Activated T-helper 1 cell treated with anti-CD3 and anti-CD28 coated beads, Interleukin-12 subunit alpha, Interleukin-12 subunit beta, Interleukin-2, Interleukin-4 antibody, amounts not matched to agents 30 ng/mL and 10 ng/mL and 1 ng/mL, durations not matched to agents 14 hours and 24 hours and 36 hours (primary cell): ENCODE measurements at regions of chrX and their contacts with region 1.

Region 1: GRCh38 chrX:119266364-119266995 is 30.4 kb downstream of the PGRMC1 start:
- DNase-seq: no peak
- H3K4me3 Mint-ChIP-seq: no peak overlapping the region
- H3K27ac Mint-ChIP-seq: no peak overlapping the region
- H3K4me1 Mint-ChIP-seq: no peaks in the 10 kb centered on the region
- H3K27me3 Mint-ChIP-seq: peaks cover 18% of the 10 kb centered on the region

Region 2: DNA sequence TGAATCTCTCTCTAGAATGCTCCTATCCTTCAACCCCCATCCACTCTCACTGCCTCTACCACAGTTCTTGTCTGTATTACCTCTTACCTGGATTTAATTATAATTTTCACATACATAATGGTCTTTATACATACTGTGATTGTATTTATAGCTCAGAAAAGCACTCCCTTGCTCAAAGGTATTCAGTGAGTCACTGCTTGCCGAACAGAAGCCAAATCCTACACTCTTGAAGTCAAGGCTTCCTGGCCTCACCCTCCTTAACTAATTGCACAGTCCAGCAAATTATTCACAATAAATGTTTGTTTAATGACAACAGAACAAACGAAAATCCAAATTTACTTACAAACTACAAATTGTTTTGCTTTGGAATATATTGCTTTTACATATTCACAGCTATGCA is 1309.4 kb before region 1 on chrX:
- intact Hi-C with region 1: no loop called
- DNase-seq: no peak
- H3K4me3 Mint-ChIP-seq: no peak overlapping the region
- H3K27ac Mint-ChIP-seq: no peak overlapping the region
- H3K4me1 Mint-ChIP-seq: no peaks in the 10 kb centered on the region
- H3K27me3 Mint-ChIP-seq: no peaks in the 10 kb centered on the region

Region 3: DNA sequence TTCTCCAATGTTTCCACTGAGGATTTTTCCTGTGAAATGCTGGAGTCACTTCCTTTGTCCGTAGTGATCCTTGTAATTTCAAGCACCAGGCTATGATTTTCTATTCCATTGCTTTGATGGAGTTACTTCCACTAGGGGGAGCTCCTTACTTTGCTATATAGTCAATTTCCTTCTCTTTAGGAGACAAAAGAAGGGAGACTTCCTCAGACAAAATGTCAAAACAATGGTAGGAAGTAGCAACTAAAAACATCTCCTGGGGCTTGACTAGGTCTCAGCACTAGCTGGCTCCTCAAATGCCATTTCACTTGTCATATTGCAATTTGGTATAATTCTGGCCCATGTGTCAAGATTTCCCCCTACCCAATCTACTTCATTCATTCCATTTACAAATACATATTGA is 418.8 kb before region 1 on chrX:
- intact Hi-C with region 1: loop called (anchors 1 kb)
- DNase-seq: no peak
- H3K4me3 Mint-ChIP-seq: no peak overlapping the region
- H3K27ac Mint-ChIP-seq: no peak overlapping the region
- H3K4me1 Mint-ChIP-seq: no peaks in the 10 kb centered on the region
- H3K27me3 Mint-ChIP-seq: no peaks in the 10 kb centered on the region

Region 4: GRCh38 chrX:119004920-119005524 is 261.5 kb before region 1 on chrX:
- intact Hi-C with region 1: loop called (anchors 1 kb)
- DNase-seq: peak; percentile 6
- H3K4me3 Mint-ChIP-seq: no peak overlapping the region
- H3K27ac Mint-ChIP-seq: no peak overlapping the region
- H3K4me1 Mint-ChIP-seq: no peaks in the 10 kb centered on the region
- H3K27me3 Mint-ChIP-seq: peaks cover 2% of the 10 kb centered on the region

Region 5: DNA sequence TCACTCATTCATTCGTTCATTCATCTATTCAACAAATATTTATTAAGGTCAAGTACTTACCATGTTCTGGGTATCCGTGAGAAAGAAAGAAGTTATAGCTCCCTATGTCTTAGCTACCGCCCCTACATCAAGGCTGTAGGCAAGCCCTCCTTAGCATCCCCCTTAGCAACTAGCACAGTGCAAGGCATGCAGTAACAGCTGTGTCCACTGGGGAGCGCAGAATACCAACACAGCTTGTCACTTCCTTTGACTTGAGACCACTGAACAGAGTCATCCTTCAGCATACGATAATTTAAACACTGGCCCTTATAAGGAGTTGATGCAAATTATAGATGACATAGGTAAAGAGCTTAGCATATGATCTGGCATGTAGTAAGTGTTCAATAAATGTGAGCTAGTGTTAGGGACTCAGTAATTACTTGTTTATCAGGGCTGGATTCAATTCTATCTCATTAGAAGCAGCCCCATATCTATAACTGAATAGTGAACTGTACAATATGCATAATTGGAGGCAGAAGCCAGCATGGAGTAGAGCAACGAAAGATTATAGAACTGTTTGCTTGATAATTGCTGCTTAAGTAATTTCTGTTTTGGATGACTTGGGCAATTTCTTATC is 147.6 kb before region 1 on chrX:
- intact Hi-C with region 1: loop called (anchors 1 kb)
- DNase-seq: peak; percentile 6
- H3K4me3 Mint-ChIP-seq: no peak overlapping the region
- H3K27ac Mint-ChIP-seq: no peak overlapping the region
- H3K4me1 Mint-ChIP-seq: no peaks in the 10 kb centered on the region
- H3K27me3 Mint-ChIP-seq: no peaks in the 10 kb centered on the region